ENCODE measurements at regions of chr16 and their contacts with region 1.

Region 1: DNA sequence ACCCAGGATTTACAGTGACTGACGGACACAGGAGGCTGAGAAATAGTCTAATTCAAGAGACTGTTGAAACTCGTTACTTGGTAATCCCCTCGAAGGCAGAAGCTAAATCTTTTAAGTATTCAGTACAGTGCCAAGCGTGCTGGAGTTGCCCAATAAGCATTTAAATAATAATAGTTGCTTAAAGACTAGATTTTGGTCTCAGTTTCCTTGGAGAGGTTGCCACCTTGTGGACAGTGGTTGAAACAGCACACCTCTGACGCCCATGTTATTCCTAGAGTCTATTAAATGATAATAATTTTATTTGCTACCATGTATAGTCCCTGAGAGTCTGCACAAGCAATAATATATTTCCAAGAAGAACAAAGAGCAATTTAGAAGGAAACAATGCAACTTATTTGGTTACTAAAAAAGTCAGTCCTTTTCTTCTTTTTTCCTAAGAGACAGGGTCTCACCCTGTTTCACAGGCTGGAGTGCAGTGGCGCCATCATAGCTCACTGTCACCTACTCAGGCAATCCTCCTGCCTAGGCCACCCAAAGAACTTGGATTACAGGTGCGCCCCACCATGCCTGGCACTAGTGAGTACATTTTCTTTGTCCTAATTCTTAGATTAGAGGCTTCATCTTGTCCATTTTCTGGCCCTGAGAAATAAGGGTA is 138.0 kb upstream of the NUDT7 start:
- DNase-seq: no peak
- ATAC-seq: peak; percentile 83
- H3K4me3 ChIP-seq: no peak overlapping the region
- H3K27ac ChIP-seq: no peak overlapping the region
- H3K4me1 ChIP-seq: peaks cover 4% of the 10 kb centered on the region
- H3K27me3 ChIP-seq: no peaks in the 10 kb centered on the region
- CTCF ChIP-seq: peak; percentile 86

Region 2: GRCh38 chr16:77236063-77236511 is 348.2 kb before region 1 on chr16:
- intact Hi-C with region 1: loop called (anchors 5 kb)
- DNase-seq: peak; percentile 91
- ATAC-seq: peak; percentile 100
- H3K4me3 ChIP-seq: no peak overlapping the region
- H3K27ac ChIP-seq: no peak overlapping the region
- H3K4me1 ChIP-seq: no peaks in the 10 kb centered on the region
- H3K27me3 ChIP-seq: peaks cover 10% of the 10 kb centered on the region
- CTCF ChIP-seq: peak; percentile 99

Measured in upper lobe of right lung (tissue), 1 donor.